Naive thymus-derived CD4-positive, alpha-beta T cell (primary cell): ENCODE measurements at regions of chr2 and their contacts with region 1.

Region 1: GRCh38 chr2:218216674-218217359 is at the start of gene ARPC2:
- DNase-seq: peak; percentile 91 to 97 (median 95)
- ATAC-seq: peak; percentile 90
- H3K4me3 ChIP-seq: peak within 1 kb of the TSS; percentile 90
- H3K4me3 Mint-ChIP-seq: peak within 1 kb of the TSS; percentile 90 to 97 (median 94)
- H3K27ac ChIP-seq: peak within 1 kb of the TSS; percentile 99
- H3K27ac Mint-ChIP-seq: peak within 1 kb of the TSS; percentile 94 to 98 (median 97)
- H3K4me1 ChIP-seq: peaks cover 25 to 33% of the 10 kb centered on the region in 2 donors
- H3K4me1 Mint-ChIP-seq: peaks cover 31 to 48% (median 42%) of the 10 kb centered on the region in 7 donors
- H3K27me3 ChIP-seq: no peaks in the 10 kb centered on the region
- H3K27me3 Mint-ChIP-seq: peaks cover 0 to 6% (median 0%) of the 10 kb centered on the region in 5 donors
- total RNA-seq, gene ARPC2: 330 to 694 (median 368) TPM

Region 2: GRCh38 chr2:217858519-217859491 is 358.0 kb before region 1 on chr2:
- CTCF ChIA-PET with region 1: no interaction called
- POLR2A ChIA-PET with region 1: no interaction called
- intact Hi-C with region 1: no loop called
- DNase-seq: no peak
- ATAC-seq: no peak
- H3K4me3 ChIP-seq: no peak overlapping the region
- H3K4me3 Mint-ChIP-seq: no peak overlapping the region
- H3K27ac ChIP-seq: no peak overlapping the region
- H3K27ac Mint-ChIP-seq: no peak overlapping the region
- H3K4me1 ChIP-seq: no peaks in the 10 kb centered on the region
- H3K4me1 Mint-ChIP-seq: no peaks in the 10 kb centered on the region
- H3K27me3 ChIP-seq: no peaks in the 10 kb centered on the region
- H3K27me3 Mint-ChIP-seq: peaks cover 0 to 12% (median 0%) of the 10 kb centered on the region in 5 donors

Region 3: GRCh38 chr2:218229239-218229638 is 12.4 kb after region 1 on chr2:
- CTCF ChIA-PET with region 1: interaction called, 8 read pairs
- POLR2A ChIA-PET with region 1: interaction called, 70 read pairs
- intact Hi-C with region 1: loop called (anchors 1 kb)
- DNase-seq: peak in 8 of 9 donors; percentile 34 to 58 (median 52)
- ATAC-seq: peak; percentile 88
- H3K4me3 ChIP-seq: no peak overlapping the region
- H3K4me3 Mint-ChIP-seq: peak overlapping the region; percentile 10 to 84 (median 76)
- H3K27ac ChIP-seq: peak overlapping the region; percentile 63
- H3K27ac Mint-ChIP-seq: peak overlapping the region; percentile 79 to 93 (median 87)
- H3K4me1 ChIP-seq: peaks cover 48 to 57% of the 10 kb centered on the region in 2 donors
- H3K4me1 Mint-ChIP-seq: peaks cover 64 to 87% (median 77%) of the 10 kb centered on the region in 7 donors
- H3K27me3 ChIP-seq: no peaks in the 10 kb centered on the region
- H3K27me3 Mint-ChIP-seq: no peaks in the 10 kb centered on the region

Region 4: DNA sequence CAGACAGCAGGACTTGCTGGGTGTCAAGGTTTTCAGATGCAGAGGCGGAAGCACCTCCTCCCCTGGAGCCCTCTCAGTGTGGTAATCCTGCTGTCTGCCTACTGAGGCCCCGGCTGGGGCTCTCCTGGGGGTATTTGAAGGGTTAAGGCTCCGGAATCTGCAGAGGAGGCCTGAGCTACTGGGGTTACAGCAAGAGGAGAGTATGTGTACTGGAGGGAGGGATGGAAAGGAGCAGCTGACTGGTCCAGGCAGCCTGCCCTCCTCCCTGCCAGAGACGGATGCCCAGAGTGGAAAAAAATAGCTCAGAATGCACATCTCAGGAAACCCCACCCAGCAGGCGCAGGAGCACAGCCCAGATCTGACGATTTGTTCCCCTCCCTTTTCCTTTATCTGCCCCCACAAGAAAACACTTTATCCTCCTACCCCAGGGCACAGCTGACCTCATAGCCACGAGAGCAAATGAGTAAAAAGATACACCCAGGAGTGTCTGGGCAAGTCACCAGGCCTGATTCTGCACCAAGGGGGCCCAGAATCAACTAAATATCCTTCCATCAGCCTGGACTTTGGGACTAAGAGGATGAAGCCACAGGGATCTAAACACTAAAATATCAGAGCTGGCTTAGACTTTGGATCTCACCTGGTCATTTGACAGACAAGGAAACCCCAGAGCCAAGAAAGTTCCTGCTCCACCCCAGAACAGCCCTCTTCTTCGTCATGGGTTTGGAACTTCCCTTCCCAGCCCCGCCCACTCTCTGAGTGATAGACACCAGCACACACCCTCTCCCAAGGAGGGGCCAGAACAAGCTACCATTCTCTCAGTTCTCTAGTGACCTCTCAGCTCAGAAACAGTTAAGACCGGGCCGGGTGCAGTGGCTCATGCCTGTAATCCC is 70.0 kb after region 1 on chr2:
- CTCF ChIA-PET with region 1: no interaction called
- POLR2A ChIA-PET with region 1: interaction called, 3 read pairs
- intact Hi-C with region 1: loop called (anchors 1 kb)
- DNase-seq: peak; percentile 53 to 90 (median 78)
- ATAC-seq: peak; percentile 87
- H3K4me3 ChIP-seq: peak overlapping the region; percentile 66
- H3K4me3 Mint-ChIP-seq: peak overlapping the region; percentile 85 to 97 (median 94)
- H3K27ac ChIP-seq: peak overlapping the region; percentile 93
- H3K27ac Mint-ChIP-seq: peak overlapping the region; percentile 95 to 99 (median 99)
- H3K4me1 ChIP-seq: peaks cover 74 to 77% of the 10 kb centered on the region in 2 donors
- H3K4me1 Mint-ChIP-seq: peaks cover 53 to 87% (median 76%) of the 10 kb centered on the region in 7 donors
- H3K27me3 ChIP-seq: no peaks in the 10 kb centered on the region
- H3K27me3 Mint-ChIP-seq: no peaks in the 10 kb centered on the region

Region 5: GRCh38 chr2:218671654-218672566 is 455.1 kb after region 1 on chr2 and contains the starts of genes RNF25 and STK36:
- CTCF ChIA-PET with region 1: no interaction called
- POLR2A ChIA-PET with region 1: no interaction called
- intact Hi-C with region 1: loop called in 1 of 2 experiments (anchors 2 kb)
- DNase-seq: peak; percentile 60 to 86 (median 79)
- ATAC-seq: peak; percentile 96
- H3K4me3 ChIP-seq: peak within 1 kb of the TSS; percentile 81
- H3K4me3 Mint-ChIP-seq: peak within 1 kb of the TSS; percentile 88 to 100 (median 98)
- H3K27ac ChIP-seq: peak within 1 kb of the TSS; percentile 84
- H3K27ac Mint-ChIP-seq: peak within 1 kb of the TSS; percentile 90 to 98 (median 96)
- H3K4me1 ChIP-seq: peaks cover 9 to 15% of the 10 kb centered on the region in 2 donors
- H3K4me1 Mint-ChIP-seq: peaks cover 14 to 29% (median 24%) of the 10 kb centered on the region in 7 donors
- H3K27me3 ChIP-seq: no peaks in the 10 kb centered on the region
- H3K27me3 Mint-ChIP-seq: no peaks in the 10 kb centered on the region
- total RNA-seq, gene RNF25: 12.6 to 33.4 (median 28.3) TPM
- total RNA-seq, gene STK36: 18.9 to 28.1 (median 19.7) TPM

Region 6: GRCh38 chr2:219245148-219245898 is 1028.5 kb after region 1 on chr2 and contains the starts of genes GLB1L and STK16:
- CTCF ChIA-PET with region 1: no interaction called
- POLR2A ChIA-PET with region 1: no interaction called
- intact Hi-C with region 1: loop called in 1 of 2 experiments (anchors 5 kb)
- DNase-seq: peak; percentile 76 to 95 (median 85)
- ATAC-seq: peak; percentile 80
- H3K4me3 ChIP-seq: peak within 1 kb of the TSS; percentile 92
- H3K4me3 Mint-ChIP-seq: peak within 1 kb of the TSS; percentile 82 to 100 (median 93)
- H3K27ac ChIP-seq: peak within 1 kb of the TSS; percentile 89
- H3K27ac Mint-ChIP-seq: peak within 1 kb of the TSS; percentile 88 to 99 (median 97)
- H3K4me1 ChIP-seq: peaks cover 52 to 53% of the 10 kb centered on the region in 2 donors
- H3K4me1 Mint-ChIP-seq: peaks cover 26 to 73% (median 59%) of the 10 kb centered on the region in 7 donors
- H3K27me3 ChIP-seq: no peaks in the 10 kb centered on the region
- H3K27me3 Mint-ChIP-seq: peaks cover 0 to 2% (median 0%) of the 10 kb centered on the region in 5 donors
- total RNA-seq, gene GLB1L: 1.9 to 4.5 (median 2.7) TPM
- total RNA-seq, gene STK16: 17.4 to 35.0 (median 21.8) TPM